ENCODE measurements at regions of chr9 and their contacts with region 1.

Region 1: GRCh38 chr9:13568841-13569601 is 289.5 kb upstream of the MPDZ start:
- DNase-seq: no peak
- ATAC-seq: peak; percentile 46
- H3K4me3 ChIP-seq: no peak overlapping the region
- H3K27ac ChIP-seq: no peak overlapping the region
- H3K4me1 ChIP-seq: 0 out of 2 replicates have a peak, but pooled peaks cover 7% of the 10 kb centered on the region
- H3K27me3 ChIP-seq: peaks cover 1 to 15% of the 10 kb centered on the region in 2 experiments; a peak in 2 of 5 replicates
- CTCF ChIP-seq: no peak
- EP300 ChIP-seq: no peak
- POLR2A ChIP-seq: no peak
- RAD21 ChIP-seq: no peak

Region 2: GRCh38 chr9:13513716-13514444 is 55.1 kb before region 1 on chr9:
- CTCF ChIA-PET with region 1: no interaction called
- POLR2A ChIA-PET with region 1: no interaction called
- in situ Hi-C with region 1: loop called (anchors 10 kb)
- intact Hi-C with region 1: no loop called
- DNase-seq: no peak
- ATAC-seq: peak; percentile 54
- H3K4me3 ChIP-seq: no peak overlapping the region
- H3K27ac ChIP-seq: no peak overlapping the region
- H3K4me1 ChIP-seq: no peaks in the 10 kb centered on the region
- H3K27me3 ChIP-seq: no peaks in the 10 kb centered on the region
- CTCF ChIP-seq: no peak
- EP300 ChIP-seq: no peak
- POLR2A ChIP-seq: no peak
- RAD21 ChIP-seq: no peak

Measured in HepG2 (cell line).